ENCODE measurements at regions of chr1 and their contacts with region 1.

Region 1: DNA sequence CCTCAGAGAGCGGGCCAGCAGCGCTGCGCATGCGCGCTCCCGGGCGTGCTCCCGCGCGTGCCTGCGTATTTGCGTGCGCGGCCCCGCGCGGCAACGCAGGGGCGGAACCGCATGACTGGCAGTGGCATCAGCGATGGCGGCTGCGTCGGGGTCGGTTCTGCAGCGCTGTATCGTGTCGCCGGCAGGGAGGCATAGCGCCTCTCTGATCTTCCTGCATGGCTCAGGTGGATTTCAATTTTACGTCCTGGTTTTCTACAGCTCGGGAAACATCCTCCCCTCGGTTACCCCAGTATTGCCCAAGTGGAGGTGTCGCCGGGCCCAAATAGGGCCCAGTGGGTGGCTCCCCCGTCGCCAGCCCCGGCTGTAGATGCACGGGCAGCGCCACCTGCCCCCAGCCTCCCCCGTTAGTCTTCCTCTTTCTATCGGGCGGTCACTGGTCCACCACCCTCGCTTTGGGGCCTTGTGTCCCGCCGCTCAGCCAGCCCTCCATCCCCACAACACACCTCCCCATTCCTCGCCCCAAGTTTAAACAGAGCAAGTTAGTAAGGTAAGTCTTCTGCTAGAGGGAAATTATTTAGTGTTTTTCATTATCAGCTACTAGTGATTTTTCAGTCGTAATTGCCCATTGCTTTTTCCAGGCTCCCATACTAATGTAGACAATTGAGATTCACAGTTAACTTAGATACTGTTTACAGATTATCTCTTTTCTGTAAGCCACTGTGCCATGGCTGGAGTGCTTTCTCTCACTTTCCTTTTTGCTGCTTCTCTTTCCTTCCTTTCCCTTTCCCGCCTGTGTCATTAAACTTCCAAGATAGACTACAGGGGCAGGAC is at the start of gene LYPLAL1:
- DNase-seq: peak; percentile 97 to 99 (median 98)
- ATAC-seq: peak; percentile 85
- H3K4me3 ChIP-seq: peak within 1 kb of the TSS; percentile 70
- H3K27ac ChIP-seq: peak within 1 kb of the TSS; percentile 83
- H3K4me1 ChIP-seq: peaks cover 9 to 10% of the 10 kb centered on the region in 2 experiments; a peak in 3 of 5 replicates
- H3K27me3 ChIP-seq: no peaks in the 10 kb centered on the region
- CTCF ChIP-seq: peak in 2 of 3 experiments; percentile 27 to 29; a peak in 2 of 6 replicates
- EP300 ChIP-seq: peak; percentile 27; the same call in 1 of the 2 replicates
- POLR2A ChIP-seq: peak; percentile 97
- RAD21 ChIP-seq: peak; percentile 29 to 40
- polyA plus RNA-seq, gene LYPLAL1: 127 to 179 TPM

Region 2: GRCh38 chr1:218304281-218305039 is 869.5 kb before region 1 on chr1:
- CTCF ChIA-PET with region 1: no interaction called
- POLR2A ChIA-PET with region 1: no interaction called
- in situ Hi-C with region 1: no loop called
- intact Hi-C with region 1: loop called (anchors 10 kb)
- DNase-seq: peak; percentile 85 to 98 (median 90)
- ATAC-seq: peak; percentile 96
- H3K4me3 ChIP-seq: no peak overlapping the region
- H3K27ac ChIP-seq: peak overlapping the region; percentile 63
- H3K4me1 ChIP-seq: peaks cover 13 to 34% of the 10 kb centered on the region in 2 experiments
- H3K27me3 ChIP-seq: no peaks in the 10 kb centered on the region
- CTCF ChIP-seq: no peak
- EP300 ChIP-seq: peak; percentile 75
- POLR2A ChIP-seq: no peak
- RAD21 ChIP-seq: no peak; a peak in 1 of 4 replicates

Region 3: GRCh38 chr1:219066631-219067349 is 107.2 kb before region 1 on chr1:
- CTCF ChIA-PET with region 1: no interaction called
- POLR2A ChIA-PET with region 1: no interaction called
- in situ Hi-C with region 1: no loop called
- intact Hi-C with region 1: loop called (anchors 5 kb)
- DNase-seq: no peak
- ATAC-seq: peak; percentile 74
- H3K4me3 ChIP-seq: no peak overlapping the region
- H3K27ac ChIP-seq: no peak overlapping the region
- H3K4me1 ChIP-seq: no peaks in the 10 kb centered on the region
- H3K27me3 ChIP-seq: no peaks in the 10 kb centered on the region
- CTCF ChIP-seq: peak; percentile 24 to 38 (median 27); a peak in 3 of 6 replicates
- EP300 ChIP-seq: no peak
- POLR2A ChIP-seq: no peak
- RAD21 ChIP-seq: peak; percentile 41 to 53; a peak in 3 of 4 replicates

Region 4: GRCh38 chr1:219088778-219089557 is 85.0 kb before region 1 on chr1:
- CTCF ChIA-PET with region 1: no interaction called
- POLR2A ChIA-PET with region 1: interaction called, 3 read pairs
- in situ Hi-C with region 1: no loop called
- intact Hi-C with region 1: loop called (anchors 1 kb)
- DNase-seq: peak; percentile 69 to 92 (median 80)
- ATAC-seq: peak; percentile 99
- H3K4me3 ChIP-seq: no peak overlapping the region
- H3K27ac ChIP-seq: peak overlapping the region; percentile 93
- H3K4me1 ChIP-seq: peaks cover 4 to 33% of the 10 kb centered on the region in 2 experiments; a peak in 4 of 5 replicates
- H3K27me3 ChIP-seq: no peaks in the 10 kb centered on the region
- CTCF ChIP-seq: no peak
- EP300 ChIP-seq: peak; percentile 92
- POLR2A ChIP-seq: peak; percentile 58
- RAD21 ChIP-seq: peak in 1 of 2 experiments; percentile 50; a peak in 2 of 4 replicates

Region 5: GRCh38 chr1:219120624-219121544 is 53.1 kb before region 1 on chr1:
- CTCF ChIA-PET with region 1: no interaction called
- POLR2A ChIA-PET with region 1: interaction called, 8 read pairs
- in situ Hi-C with region 1: no loop called
- intact Hi-C with region 1: loop called (anchors 1 kb)
- DNase-seq: peak; percentile 65 to 87 (median 72)
- ATAC-seq: peak; percentile 92
- H3K4me3 ChIP-seq: no peak overlapping the region
- H3K27ac ChIP-seq: peak overlapping the region; percentile 88
- H3K4me1 ChIP-seq: peaks cover 0 to 24% of the 10 kb centered on the region in 2 experiments; a peak in 2 of 5 replicates
- H3K27me3 ChIP-seq: no peaks in the 10 kb centered on the region
- CTCF ChIP-seq: no peak
- EP300 ChIP-seq: peak; percentile 95
- POLR2A ChIP-seq: no peak
- RAD21 ChIP-seq: no peak

Region 6: GRCh38 chr1:219159946-219160645 is 13.9 kb before region 1 on chr1:
- CTCF ChIA-PET with region 1: no interaction called
- POLR2A ChIA-PET with region 1: interaction called, 10 read pairs
- in situ Hi-C with region 1: no loop called
- intact Hi-C with region 1: no loop called
- DNase-seq: peak in 2 of 4 experiments; percentile 28 to 34
- ATAC-seq: peak; percentile 63
- H3K4me3 ChIP-seq: no peak overlapping the region
- H3K27ac ChIP-seq: no peak overlapping the region
- H3K4me1 ChIP-seq: peaks cover 0 to 6% of the 10 kb centered on the region in 2 experiments; a peak in 2 of 5 replicates
- H3K27me3 ChIP-seq: no peaks in the 10 kb centered on the region
- CTCF ChIP-seq: no peak
- EP300 ChIP-seq: no peak
- POLR2A ChIP-seq: no peak
- RAD21 ChIP-seq: no peak

Region 7: GRCh38 chr1:219189021-219189824 is 15.2 kb after region 1 on chr1:
- CTCF ChIA-PET with region 1: no interaction called
- POLR2A ChIA-PET with region 1: interaction called, 40 read pairs
- in situ Hi-C with region 1: no loop called
- intact Hi-C with region 1: no loop called
- DNase-seq: peak in 2 of 4 experiments; percentile 30 to 38
- ATAC-seq: peak; percentile 56
- H3K4me3 ChIP-seq: no peak overlapping the region
- H3K27ac ChIP-seq: no peak overlapping the region
- H3K4me1 ChIP-seq: peaks cover 0 to 10% of the 10 kb centered on the region in 2 experiments; a peak in 2 of 5 replicates
- H3K27me3 ChIP-seq: no peaks in the 10 kb centered on the region
- CTCF ChIP-seq: no peak
- EP300 ChIP-seq: no peak; the same call in 1 of the 2 replicates
- POLR2A ChIP-seq: no peak
- RAD21 ChIP-seq: no peak

Region 8: DNA sequence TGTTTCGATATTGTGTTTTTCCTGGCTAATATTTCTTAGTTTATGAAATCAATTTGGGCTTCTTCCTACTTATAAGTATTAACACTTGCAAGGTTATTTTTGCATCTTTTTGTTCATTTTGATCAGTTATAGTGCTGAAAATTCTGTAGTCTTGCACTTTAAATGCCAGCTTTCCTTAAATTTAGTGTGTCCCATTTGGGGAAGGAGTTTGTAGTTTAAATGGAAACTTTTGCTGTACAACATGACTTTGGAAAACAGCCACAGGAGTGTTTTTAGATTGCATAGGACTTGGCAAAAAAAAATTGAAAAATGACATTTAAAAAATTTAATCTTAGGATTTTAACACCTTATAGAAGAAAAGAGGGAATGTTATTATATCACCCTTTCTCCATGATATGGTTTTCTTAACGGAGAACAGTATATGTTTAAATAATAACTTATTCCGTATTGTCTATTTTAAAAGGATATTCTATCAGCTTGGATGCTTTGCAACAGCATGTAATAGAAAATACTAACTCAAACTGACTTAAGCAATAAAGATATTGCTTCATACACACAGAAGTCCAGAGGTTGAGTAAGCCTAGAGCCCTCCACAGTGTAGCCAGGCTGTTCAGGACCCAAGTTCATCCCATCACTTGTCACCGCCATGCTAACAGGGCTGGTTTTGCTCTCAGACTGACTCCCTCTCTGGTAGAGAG is 53.5 kb after region 1 on chr1:
- CTCF ChIA-PET with region 1: no interaction called
- POLR2A ChIA-PET with region 1: no interaction called
- in situ Hi-C with region 1: no loop called
- intact Hi-C with region 1: no loop called
- DNase-seq: no peak
- ATAC-seq: no peak
- H3K4me3 ChIP-seq: no peak overlapping the region
- H3K27ac ChIP-seq: no peak overlapping the region
- H3K4me1 ChIP-seq: no peaks in the 10 kb centered on the region
- H3K27me3 ChIP-seq: no peaks in the 10 kb centered on the region
- CTCF ChIP-seq: no peak
- EP300 ChIP-seq: no peak
- POLR2A ChIP-seq: no peak
- RAD21 ChIP-seq: no peak

Region 9: DNA sequence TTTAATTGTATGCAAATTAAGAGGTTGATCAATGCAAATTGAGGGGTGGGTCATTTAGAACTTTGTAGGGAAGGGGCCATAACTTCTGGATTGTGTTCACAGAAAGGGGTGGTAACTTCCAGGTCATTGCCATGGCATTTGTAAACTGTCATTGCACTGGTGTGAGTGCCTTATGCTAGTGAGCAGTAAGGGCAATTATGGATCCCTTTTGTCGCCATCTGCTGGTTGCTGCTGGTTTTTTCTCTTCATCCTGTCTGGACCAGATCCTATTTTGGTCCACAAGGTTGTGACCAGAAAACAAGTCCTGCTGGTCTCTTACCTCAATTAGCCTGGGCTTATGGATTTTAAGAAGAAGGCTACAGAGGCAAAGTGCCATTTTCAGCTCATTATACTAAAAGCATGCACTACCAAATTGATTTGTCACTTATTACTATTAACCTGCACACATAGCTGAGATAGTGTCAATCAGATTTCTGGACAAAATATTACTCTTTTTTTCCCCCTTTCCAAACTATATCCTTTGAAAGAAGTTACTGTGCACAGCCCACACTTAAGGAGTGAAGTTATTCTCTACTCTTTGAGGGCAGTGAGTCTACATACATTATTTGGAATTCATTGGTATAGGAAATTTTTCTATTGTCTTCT is 242.7 kb after region 1 on chr1:
- CTCF ChIA-PET with region 1: no interaction called
- POLR2A ChIA-PET with region 1: no interaction called
- in situ Hi-C with region 1: no loop called
- intact Hi-C with region 1: no loop called
- DNase-seq: peak; percentile 26 to 72 (median 36)
- ATAC-seq: peak; percentile 97
- H3K4me3 ChIP-seq: no peak overlapping the region
- H3K27ac ChIP-seq: no peak overlapping the region
- H3K4me1 ChIP-seq: no peaks in the 10 kb centered on the region
- H3K27me3 ChIP-seq: no peaks in the 10 kb centered on the region
- CTCF ChIP-seq: peak; percentile 72 to 80 (median 76)
- EP300 ChIP-seq: no peak
- POLR2A ChIP-seq: no peak
- RAD21 ChIP-seq: peak; percentile 58 to 78

Measured in K562 (cell line).